ENCODE measurements at regions of chr11 and their contacts with region 1.

Region 1: GRCh38 chr11:48109046-48109666 is 107.5 kb upstream of the OR4B1 start:
- DNase-seq: peak; percentile 82
- H3K4me3 ChIP-seq: peak overlapping the region; percentile 61
- H3K27ac ChIP-seq: peak overlapping the region; percentile 76
- H3K4me1 ChIP-seq: peaks cover 70% of the 10 kb centered on the region
- CTCF ChIP-seq: no peak; the same call in none of the 2 replicates

Region 2: GRCh38 chr11:47317064-47317828 is 791.9 kb before region 1 on chr11:
- CTCF ChIA-PET with region 1: no interaction called
- POLR2A ChIA-PET with region 1: no interaction called
- intact Hi-C with region 1: no loop called
- DNase-seq: no peak
- H3K4me3 ChIP-seq: no peak overlapping the region
- H3K27ac ChIP-seq: no peak overlapping the region
- H3K4me1 ChIP-seq: no peaks in the 10 kb centered on the region
- CTCF ChIP-seq: no peak

Region 3: DNA sequence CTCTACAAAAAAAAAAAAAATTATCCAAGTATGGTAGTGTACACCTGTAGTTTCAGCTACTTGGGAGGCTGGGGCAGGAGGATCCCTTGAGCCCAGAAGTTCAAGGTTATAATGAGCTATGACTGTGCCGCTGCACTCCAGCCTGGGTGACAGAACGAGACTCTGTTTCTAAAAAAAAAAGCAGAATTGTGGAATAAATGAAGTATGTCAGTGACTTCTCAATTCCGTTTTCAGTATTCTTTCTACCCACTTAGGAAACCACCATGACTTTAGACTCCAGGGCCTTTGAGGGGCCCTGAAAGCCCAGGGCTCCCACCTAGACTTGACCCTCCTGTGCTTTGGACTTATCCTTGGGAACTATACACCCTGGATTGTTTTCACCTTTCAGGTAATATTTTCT is 254.5 kb before region 1 on chr11:
- CTCF ChIA-PET with region 1: interaction called, 4 read pairs
- POLR2A ChIA-PET with region 1: interaction called, 3 read pairs
- intact Hi-C with region 1: loop called (anchors 1 kb)
- DNase-seq: peak; percentile 35
- H3K4me3 ChIP-seq: no peak overlapping the region
- H3K27ac ChIP-seq: peak overlapping the region; percentile 22
- H3K4me1 ChIP-seq: peaks cover 97% of the 10 kb centered on the region
- CTCF ChIP-seq: no peak

Region 4: DNA sequence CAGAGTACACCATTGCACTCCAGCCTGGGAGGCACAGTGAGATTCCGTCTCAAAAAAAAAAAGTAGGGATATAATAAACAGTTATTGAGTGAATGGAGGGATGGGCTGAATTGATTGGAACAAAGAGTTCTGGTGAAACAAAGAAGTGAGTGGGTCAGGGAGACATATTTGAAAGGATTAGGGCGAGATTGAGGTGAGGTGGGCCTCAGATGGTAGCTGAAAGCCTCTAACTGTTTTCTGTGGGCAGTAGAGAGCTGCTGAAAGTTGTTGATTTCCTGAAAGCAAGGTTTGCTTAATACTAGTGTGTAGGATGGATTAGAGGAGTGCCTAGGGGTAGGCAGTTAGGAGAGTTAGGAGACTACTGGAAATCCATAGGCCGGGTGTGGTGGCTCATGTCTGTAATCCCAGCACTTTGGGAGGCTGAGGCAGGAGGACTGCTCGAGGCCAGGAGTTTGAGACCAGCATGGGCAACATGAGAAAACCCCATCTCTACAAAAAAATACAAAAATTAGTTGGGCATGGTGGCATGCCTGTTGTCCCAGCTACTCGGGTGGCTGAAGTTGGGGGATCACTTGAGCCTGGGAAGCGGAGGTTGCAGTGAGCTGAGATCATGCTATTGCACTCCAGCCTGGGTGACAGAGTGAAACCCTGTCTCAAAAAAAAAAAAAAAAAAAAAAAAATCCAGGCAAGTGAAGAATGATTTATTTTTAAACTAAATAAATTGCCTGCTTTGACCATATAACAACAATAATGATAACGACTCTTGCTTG is 170.2 kb before region 1 on chr11:
- CTCF ChIA-PET with region 1: interaction called, 35 read pairs
- POLR2A ChIA-PET with region 1: interaction called, 24 read pairs
- intact Hi-C with region 1: loop called (anchors 1 kb)
- DNase-seq: no peak
- H3K4me3 ChIP-seq: no peak overlapping the region
- H3K27ac ChIP-seq: no peak overlapping the region
- H3K4me1 ChIP-seq: peaks cover 25% of the 10 kb centered on the region
- CTCF ChIP-seq: no peak

Region 5: GRCh38 chr11:47980245-47981049 is 128.7 kb before region 1 on chr11 and contains the start of gene PTPRJ:
- CTCF ChIA-PET with region 1: no interaction called
- POLR2A ChIA-PET with region 1: interaction called, 7 read pairs
- intact Hi-C with region 1: loop called (anchors 5 kb)
- DNase-seq: peak; percentile 65
- H3K4me3 ChIP-seq: peak within 1 kb of the TSS; percentile 82
- H3K27ac ChIP-seq: no peak within 1 kb of the TSS
- H3K4me1 ChIP-seq: peaks cover 38% of the 10 kb centered on the region
- CTCF ChIP-seq: no peak
- total RNA-seq, gene PTPRJ: 4.5 and 5.4 TPM in 2 replicates

Region 6: DNA sequence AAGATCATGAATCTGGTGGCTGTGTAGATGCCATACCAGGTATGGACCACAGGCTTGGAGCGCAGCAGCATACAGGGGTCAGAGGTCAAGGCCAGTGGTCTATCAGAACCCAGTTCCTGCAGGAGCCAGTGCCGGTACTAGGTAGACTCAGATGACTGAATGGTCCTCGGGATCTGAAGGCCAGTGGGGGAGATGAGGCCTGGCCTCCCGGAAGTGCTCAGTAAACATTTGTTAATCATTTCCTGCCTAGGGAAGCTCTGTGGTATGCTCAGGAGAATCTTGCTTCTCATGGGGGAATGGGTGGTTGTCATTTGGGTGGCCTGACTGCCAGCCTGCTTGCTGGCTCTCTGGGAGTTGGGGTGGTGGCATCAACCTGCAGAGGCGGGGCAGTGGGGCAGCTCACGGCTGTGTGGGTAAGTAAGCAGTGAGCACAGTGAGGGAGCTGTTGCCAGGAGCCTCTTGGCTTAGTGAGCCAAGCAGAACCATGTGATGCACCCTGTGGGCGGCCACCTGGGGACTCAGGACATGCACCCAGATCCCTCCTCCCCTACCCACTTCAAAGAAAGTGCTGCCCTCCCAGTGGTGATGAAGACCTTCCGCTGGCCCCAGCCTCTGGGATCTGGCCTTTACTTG is 95.8 kb before region 1 on chr11:
- CTCF ChIA-PET with region 1: interaction called, 4 read pairs
- POLR2A ChIA-PET with region 1: interaction called, 14 read pairs
- intact Hi-C with region 1: no loop called
- DNase-seq: peak; percentile 81
- H3K4me3 ChIP-seq: peak overlapping the region; percentile 8
- H3K27ac ChIP-seq: peak overlapping the region; percentile 55
- H3K4me1 ChIP-seq: peaks cover 77% of the 10 kb centered on the region
- CTCF ChIP-seq: no peak

Region 7: GRCh38 chr11:48043111-48043990 is 65.8 kb before region 1 on chr11:
- CTCF ChIA-PET with region 1: interaction called, 3 read pairs
- POLR2A ChIA-PET with region 1: interaction called, 12 read pairs
- intact Hi-C with region 1: loop called (anchors 1 kb)
- DNase-seq: peak; percentile 91
- H3K4me3 ChIP-seq: peak overlapping the region; percentile 50
- H3K27ac ChIP-seq: peak overlapping the region; percentile 92
- H3K4me1 ChIP-seq: peaks cover 82% of the 10 kb centered on the region
- CTCF ChIP-seq: no peak

Region 8: DNA sequence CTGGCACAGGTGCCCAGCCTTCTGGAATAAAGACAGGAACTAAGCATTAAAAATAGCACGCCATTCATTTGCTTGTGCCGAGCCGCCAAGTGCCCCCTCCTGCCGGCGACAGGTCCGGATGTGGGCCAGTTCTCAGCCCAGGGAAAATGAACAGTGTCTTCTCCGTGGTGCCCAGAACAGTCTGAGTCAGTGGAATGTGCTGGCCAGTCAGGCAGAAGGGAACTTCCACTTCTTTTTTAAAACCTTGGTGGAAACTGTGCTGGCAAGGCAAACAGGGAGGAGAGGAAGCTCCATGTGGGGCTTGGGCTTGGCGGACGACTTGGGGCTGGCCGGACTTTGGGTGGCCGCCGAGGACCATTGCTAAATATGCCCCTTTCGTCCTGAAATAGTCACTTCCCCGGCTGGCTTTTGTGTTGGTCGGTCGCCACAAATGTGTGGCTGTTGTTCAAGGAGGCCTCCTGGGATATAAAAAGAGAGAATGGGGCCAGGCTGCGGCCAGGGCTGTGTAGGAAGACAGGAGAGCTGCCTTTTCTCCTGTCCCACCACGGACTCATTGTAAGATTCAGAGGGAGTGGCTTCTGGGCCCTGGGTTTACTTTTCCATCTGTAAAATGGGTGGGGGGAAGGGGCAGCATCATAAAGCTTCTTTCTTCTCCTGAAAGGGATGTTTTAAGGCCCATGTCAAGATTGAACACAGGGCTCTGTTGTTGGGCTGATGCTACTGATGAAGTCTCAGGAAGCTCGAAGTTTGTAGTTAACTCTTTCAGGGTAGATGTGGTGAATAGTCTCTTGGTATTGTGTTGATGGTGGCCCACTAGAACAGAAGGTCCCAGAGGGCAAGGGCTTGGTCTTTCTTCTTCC is 27.8 kb before region 1 on chr11:
- CTCF ChIA-PET with region 1: no interaction called
- POLR2A ChIA-PET with region 1: interaction called, 5 read pairs
- intact Hi-C with region 1: loop called (anchors 1 kb)
- DNase-seq: peak; percentile 75
- H3K4me3 ChIP-seq: peak overlapping the region; percentile 43
- H3K27ac ChIP-seq: peak overlapping the region; percentile 33
- H3K4me1 ChIP-seq: peaks cover 40% of the 10 kb centered on the region
- CTCF ChIP-seq: no peak

Region 9: GRCh38 chr11:48129697-48130395 is 20.7 kb after region 1 on chr11:
- CTCF ChIA-PET with region 1: no interaction called
- POLR2A ChIA-PET with region 1: no interaction called
- intact Hi-C with region 1: no loop called
- DNase-seq: no peak
- H3K4me3 ChIP-seq: no peak overlapping the region
- H3K27ac ChIP-seq: no peak overlapping the region
- H3K4me1 ChIP-seq: no peaks in the 10 kb centered on the region
- CTCF ChIP-seq: no peak

Region 10: DNA sequence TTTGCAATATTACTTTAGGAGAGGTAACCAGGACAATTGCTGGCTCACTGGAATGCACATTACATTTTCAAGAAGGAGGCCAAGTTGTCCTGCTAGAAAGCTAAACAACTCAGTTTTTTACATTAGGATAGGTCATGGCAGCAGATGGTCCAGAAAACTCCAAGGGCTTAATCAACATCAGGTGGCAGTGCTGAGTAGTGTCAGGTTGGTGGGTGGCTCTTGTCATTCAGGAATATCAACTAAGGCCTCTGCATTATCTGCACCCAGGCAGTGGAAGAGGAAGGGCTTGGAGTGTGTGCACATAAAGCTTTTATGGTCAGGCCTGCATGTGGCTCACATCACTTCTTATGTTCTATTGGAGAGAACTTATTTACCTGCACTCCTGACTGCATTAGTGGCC is 75.3 kb after region 1 on chr11:
- CTCF ChIA-PET with region 1: no interaction called
- POLR2A ChIA-PET with region 1: no interaction called
- intact Hi-C with region 1: no loop called
- DNase-seq: no peak
- H3K4me3 ChIP-seq: no peak overlapping the region
- H3K27ac ChIP-seq: no peak overlapping the region
- H3K4me1 ChIP-seq: no peaks in the 10 kb centered on the region
- CTCF ChIP-seq: peak; percentile 26; the same call in 1 of the 2 replicates